H1 (cell line): ENCODE measurements at regions of chr1 and their contacts with region 1.

Region 1: GRCh38 chr1:62962901-62963776 is 179.2 kb downstream of the ATG4C start:
- DNase-seq: peak; percentile 81 to 84
- H3K4me3 ChIP-seq: peak overlapping the region in 1 of 4 experiments; percentile 38; a peak in 1 of 8 replicates
- H3K27ac ChIP-seq: no peak overlapping the region
- H3K4me1 ChIP-seq: peaks cover 0 to 15% (median 4%) of the 10 kb centered on the region in 4 experiments; a peak in 6 of 7 replicates
- H3K27me3 ChIP-seq: peaks cover 0 to 2% (median 0%) of the 10 kb centered on the region in 4 experiments; a peak in 1 of 7 replicates
- CTCF ChIP-seq: peak; percentile 83 to 93 (median 88)
- EP300 ChIP-seq: no peak
- POLR2A ChIP-seq: no peak
- RAD21 ChIP-seq: peak; percentile 87 to 93

Region 2: DNA sequence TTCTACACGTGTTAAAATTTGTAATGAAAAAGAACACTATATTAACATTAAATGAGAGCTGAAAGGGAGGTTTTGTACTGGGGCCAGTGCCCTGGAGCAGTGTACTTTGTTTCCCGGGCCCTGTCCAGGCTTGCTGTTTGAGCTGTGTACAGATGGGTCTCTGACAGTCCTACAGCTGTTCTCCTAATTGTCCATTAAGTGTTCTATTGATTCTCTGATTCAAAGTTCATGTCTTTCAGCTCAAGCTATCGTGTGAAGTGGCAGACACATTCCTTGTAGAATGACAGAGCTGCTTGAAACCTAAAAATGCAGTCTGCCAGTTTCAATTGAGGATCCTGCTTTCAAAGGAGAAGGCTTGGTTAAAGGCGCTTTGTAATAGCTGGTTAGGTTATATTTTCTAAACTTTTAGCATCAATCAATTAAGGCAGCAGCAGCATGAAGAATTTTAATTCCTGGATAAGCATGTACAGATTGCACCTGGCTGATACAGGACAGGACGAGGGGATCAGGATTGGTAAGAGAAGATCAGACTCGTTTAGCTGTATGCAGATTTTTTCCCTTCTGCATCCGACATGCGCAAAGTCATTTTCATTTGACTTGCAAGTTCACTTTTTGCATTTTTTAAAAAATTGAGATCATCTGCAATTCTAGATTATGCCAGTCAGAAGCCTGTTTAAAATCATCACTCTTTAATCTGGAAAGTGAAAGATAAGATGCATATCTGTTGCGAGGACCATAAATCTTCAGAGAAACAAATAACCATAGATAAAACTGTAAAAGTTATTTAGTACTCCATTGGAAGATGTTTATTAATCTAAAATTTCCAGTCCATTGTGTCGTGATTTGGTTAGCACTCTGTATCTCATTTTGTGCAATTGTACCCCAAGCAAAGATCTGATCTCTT is 80.7 kb before region 1 on chr1:
- CTCF ChIA-PET with region 1: no interaction called
- POLR2A ChIA-PET with region 1: no interaction called
- DNase-seq: no peak
- H3K4me3 ChIP-seq: no peak overlapping the region
- H3K27ac ChIP-seq: no peak overlapping the region
- H3K4me1 ChIP-seq: peaks cover 0 to 7% (median 4%) of the 10 kb centered on the region in 4 experiments; a peak in 3 of 7 replicates
- H3K27me3 ChIP-seq: no peaks in the 10 kb centered on the region
- CTCF ChIP-seq: no peak
- EP300 ChIP-seq: no peak
- POLR2A ChIP-seq: no peak
- RAD21 ChIP-seq: no peak

Region 3: DNA sequence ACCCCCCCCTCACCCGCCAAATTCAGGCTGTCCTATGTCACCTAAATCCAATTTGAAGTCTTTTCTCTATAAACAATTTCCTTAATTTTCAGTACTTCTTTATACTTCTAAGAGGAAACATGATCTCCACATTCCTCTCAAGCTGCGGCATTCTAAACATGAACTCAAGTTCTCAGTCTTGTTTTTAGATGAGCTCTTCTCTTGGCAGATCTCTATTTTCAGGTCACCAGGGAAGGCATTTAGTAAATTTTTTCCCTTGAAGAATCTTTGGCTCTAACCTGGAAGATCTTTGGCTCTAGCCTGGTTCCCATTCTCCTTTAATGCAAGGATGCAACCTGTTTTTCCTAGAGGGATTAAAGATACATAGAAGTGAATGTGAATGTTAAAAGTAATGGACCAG is 14.2 kb after region 1 on chr1:
- CTCF ChIA-PET with region 1: interaction called, 53 read pairs
- POLR2A ChIA-PET with region 1: no interaction called
- DNase-seq: no peak
- H3K4me3 ChIP-seq: no peak overlapping the region
- H3K27ac ChIP-seq: no peak overlapping the region
- H3K4me1 ChIP-seq: peaks cover 0 to 3% (median 1%) of the 10 kb centered on the region in 4 experiments; a peak in 2 of 7 replicates
- H3K27me3 ChIP-seq: no peaks in the 10 kb centered on the region
- CTCF ChIP-seq: no peak
- EP300 ChIP-seq: no peak
- POLR2A ChIP-seq: no peak
- RAD21 ChIP-seq: no peak

Region 4: GRCh38 chr1:63042278-63042677 is 79.1 kb after region 1 on chr1:
- CTCF ChIA-PET with region 1: no interaction called
- POLR2A ChIA-PET with region 1: no interaction called
- DNase-seq: no peak
- H3K4me3 ChIP-seq: no peak overlapping the region
- H3K27ac ChIP-seq: no peak overlapping the region
- H3K4me1 ChIP-seq: peaks cover 0 to 5% (median 1%) of the 10 kb centered on the region in 4 experiments; a peak in 4 of 7 replicates
- H3K27me3 ChIP-seq: no peaks in the 10 kb centered on the region; a peak in 1 of 7 replicates
- CTCF ChIP-seq: no peak
- EP300 ChIP-seq: no peak
- POLR2A ChIP-seq: no peak
- RAD21 ChIP-seq: no peak

Region 5: DNA sequence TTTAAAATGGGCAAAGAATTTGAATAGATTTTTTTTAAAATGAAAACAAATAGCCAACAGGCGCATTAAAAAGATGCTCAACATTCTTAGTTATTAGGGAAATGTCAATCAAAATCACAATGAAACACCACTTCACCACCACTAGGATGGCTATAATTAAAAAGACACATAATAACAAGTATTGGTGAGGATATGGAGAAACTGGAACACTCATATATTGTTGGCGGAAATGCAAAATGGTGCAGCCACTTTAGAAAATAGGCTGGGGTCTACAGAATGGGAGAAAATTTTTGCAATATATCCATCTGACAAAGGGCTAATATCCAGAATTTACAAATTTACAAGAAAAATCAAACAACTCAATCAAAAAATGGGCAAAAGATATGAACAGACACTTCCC is 251.4 kb after region 1 on chr1:
- CTCF ChIA-PET with region 1: no interaction called
- POLR2A ChIA-PET with region 1: no interaction called
- DNase-seq: no peak
- H3K4me3 ChIP-seq: no peak overlapping the region
- H3K27ac ChIP-seq: no peak overlapping the region
- H3K4me1 ChIP-seq: no peaks in the 10 kb centered on the region; a peak in 1 of 7 replicates
- H3K27me3 ChIP-seq: no peaks in the 10 kb centered on the region
- CTCF ChIP-seq: no peak
- EP300 ChIP-seq: no peak
- POLR2A ChIP-seq: no peak
- RAD21 ChIP-seq: no peak